ENCODE measurements at regions of chr11 and their contacts with region 1.

Region 1: DNA sequence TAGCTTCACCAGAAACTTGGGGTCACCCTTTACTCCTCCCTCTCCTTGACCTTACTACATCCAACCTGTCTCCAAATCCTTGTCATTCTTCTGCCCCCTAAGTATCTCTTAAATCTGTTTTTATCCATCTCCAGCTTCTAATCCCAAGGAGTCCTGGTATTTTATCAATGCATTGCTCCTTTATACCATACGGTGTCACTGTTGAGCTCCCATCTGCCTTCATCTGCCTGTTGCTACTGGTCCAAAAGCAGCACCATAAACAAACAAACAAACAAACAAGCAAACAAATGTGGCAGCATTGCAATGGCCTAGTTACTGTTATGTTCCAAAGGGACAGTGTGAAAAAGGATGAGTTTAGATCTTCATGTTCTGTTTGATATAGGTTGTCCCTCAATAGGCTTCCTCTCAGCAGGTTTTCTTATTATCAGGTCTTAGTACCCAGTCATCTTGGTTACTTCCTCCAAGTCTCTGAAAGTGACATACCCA is 34.2 kb downstream of the DNHD1 start:
- DNase-seq: no peak

Region 2: GRCh38 chr11:6431861-6432260 is 99.4 kb before region 1 on chr11:
- intact Hi-C with region 1: no loop called
- DNase-seq: peak in 1 of 10 donors; percentile 10

Region 3: DNA sequence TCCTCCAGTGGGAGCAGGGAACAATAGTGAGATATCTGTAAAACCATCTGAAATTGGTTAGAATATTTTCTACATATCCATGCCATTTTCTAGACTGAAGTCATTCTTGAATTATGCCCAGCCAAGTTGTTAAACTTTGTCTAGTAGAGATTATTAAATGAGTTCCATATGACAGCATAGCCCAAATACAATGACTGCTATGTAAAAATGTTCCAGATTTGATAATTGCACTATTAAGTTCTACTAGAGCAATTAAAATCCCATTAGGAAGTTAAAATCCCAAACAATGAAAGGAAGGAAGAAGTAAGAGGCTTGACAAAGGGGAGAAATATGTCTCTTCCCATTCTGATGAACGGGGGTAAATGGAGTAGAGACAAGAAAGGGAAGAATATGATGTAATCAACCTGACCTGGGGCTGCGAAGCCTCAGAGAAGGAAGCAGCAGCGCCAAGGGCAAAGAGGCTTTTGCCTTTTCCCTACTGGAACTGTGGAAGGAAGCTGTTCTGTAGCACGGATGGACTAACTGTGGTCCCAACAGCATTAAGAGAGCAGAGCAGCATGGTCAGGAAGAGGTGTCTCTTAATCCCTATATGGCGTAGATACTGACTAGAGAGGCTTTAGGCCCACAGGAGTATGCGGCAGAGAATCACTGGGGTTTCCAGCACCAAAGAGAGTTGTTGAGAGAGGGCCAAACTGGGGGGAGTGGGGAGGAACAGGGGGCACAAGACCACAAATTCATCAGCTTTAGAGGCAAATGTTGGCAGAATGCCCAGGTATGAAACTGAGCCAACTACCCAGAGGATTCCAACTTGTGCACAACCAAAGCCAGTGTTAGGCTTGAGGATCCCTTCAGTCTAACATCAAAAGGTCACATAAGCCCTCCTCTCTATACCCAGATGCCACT is 45.4 kb after region 1 on chr11:
- intact Hi-C with region 1: loop called (anchors 5 kb)
- DNase-seq: peak in 6 of 10 donors; percentile 65 to 94 (median 76)

Region 4: GRCh38 chr11:6603287-6604080 is 72.2 kb after region 1 on chr11 and contains the starts of genes ILK and RRP8:
- intact Hi-C with region 1: loop called (anchors 5 kb)
- DNase-seq: peak; percentile 88 to 98 (median 91)

Region 5: DNA sequence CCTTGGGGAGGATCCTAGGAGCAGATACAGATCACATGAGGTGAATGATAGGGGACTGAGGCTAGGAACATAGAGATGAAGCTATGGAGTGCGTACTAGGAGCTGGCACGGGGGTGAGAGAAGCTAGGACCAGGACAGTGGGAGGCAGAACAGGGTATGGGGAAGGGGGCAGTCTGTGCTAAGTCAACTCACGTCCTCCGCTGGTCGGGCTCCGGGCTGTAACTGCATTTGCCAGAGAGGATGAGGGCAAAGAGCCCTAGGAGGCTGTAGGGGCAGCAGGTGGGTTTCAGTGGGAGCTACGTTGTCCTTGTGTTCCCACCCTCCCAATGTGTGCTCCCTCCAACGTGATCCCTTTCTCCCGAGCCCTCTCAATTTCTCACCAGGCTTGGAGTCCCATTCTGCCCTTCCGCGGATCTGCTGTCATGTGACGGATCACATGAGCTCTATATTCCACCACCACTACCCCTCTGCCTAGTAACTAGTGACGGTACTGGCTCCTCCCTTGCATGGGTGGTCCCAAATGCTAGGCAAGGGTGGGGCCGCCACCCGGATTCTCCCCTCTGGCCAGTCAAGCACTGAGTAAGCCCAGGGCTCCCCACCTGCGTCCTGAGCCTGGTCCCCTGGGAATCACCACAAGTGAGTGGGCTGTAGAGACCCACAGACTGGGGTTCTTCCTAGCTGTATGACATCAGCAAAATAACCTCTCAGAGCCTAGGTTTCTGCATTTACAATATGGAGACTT is 87.9 kb after region 1 on chr11 and contains the start of gene TPP1:
- intact Hi-C with region 1: loop called (anchors 5 kb)
- DNase-seq: peak; percentile 90 to 99 (median 95)